ENCODE measurements at regions of chr1 and their contacts with region 1.

Region 1: DNA sequence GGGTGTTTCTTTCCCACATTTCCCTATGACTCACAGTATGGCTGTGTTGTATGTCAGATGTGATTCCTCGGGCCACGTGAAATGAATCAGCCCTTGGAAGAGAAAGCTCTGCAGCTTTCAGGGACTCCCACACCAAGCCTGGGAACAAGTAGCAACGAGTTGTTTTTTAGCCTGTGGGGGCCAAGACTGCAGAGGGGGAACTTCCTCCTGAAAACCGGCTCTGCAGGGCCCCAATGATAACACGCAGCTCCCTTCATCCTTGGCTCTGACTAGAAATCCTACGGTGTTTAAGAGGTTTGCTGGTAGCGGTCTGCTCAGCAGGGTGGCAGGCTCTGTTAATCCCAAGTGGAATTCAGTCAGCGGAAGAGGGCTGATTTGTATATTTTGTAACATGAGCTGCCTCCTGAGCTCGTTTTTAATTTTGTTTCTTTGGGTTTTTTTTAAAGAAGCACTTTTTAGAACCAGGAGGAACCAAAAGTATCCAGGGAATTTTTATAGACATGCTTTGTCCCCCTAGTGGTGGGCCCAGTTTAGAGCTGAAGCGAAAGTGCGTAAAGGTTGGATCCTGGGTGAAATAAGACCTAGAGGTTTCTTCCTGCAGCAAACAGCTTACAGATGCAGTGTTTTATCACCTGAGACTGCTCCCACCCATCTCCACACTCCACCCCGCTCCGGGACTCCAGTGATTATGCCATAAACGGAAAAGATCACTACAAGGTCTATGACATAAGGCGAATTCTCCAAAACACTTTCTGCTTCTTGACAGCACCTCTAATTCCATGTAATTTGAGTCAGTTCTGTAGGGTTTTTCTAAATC is 48.8 kb downstream of the LAMC2 start:
- DNase-seq: peak; percentile 27
- H3K4me3 ChIP-seq: peak overlapping the region; percentile 44 to 63
- H3K27ac ChIP-seq: peak overlapping the region; percentile 86 to 98
- H3K4me1 ChIP-seq: peaks cover 6 to 23% of the 10 kb centered on the region in 2 experiments; a peak in 2 of 4 replicates
- H3K27me3 ChIP-seq: no peaks in the 10 kb centered on the region
- CTCF ChIP-seq: peak; percentile 90
- EP300 ChIP-seq: peak in 1 of 2 experiments; percentile 61; a peak in 1 of 4 replicates
- RAD21 ChIP-seq: no peak; the same call in 1 of the 2 replicates

Region 2: DNA sequence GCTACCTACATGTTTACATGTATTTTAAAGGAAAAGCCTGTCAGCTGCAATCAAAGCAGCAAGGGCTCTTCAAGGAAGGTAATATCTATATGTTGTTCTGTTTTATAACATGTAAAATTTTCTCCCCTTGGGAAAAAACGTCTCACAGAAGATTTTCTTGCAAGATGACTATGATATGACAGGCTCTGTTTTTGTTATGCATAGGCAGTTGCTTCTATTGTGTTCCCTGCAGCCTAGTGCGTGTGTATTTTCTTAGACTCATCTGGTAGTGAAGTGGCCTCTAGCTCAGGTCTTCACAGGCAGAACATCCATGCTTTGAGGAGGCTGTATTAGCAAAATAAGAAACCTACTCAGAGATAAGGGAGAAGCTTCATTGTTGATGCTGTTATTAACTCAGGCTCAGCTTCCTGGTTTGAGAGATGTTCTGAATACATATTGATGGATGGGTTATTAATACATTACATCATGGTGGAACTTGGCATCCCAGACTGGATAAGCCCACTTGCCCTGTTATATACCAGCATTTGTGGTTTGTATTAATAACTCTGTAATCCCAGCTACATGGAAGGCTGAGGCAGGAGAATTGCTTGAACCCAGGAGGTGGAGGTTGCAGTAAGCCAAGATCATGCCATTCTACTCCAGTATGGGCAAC is 175.9 kb before region 1 on chr1:
- CTCF ChIA-PET with region 1: no interaction called
- POLR2A ChIA-PET with region 1: no interaction called
- DNase-seq: no peak
- H3K4me3 ChIP-seq: no peak overlapping the region
- H3K27ac ChIP-seq: peak overlapping the region in 1 of 2 experiments; percentile 84; a peak in 1 of 4 replicates
- H3K4me1 ChIP-seq: peaks cover 0 to 35% of the 10 kb centered on the region in 2 experiments; a peak in 3 of 4 replicates
- H3K27me3 ChIP-seq: no peaks in the 10 kb centered on the region
- CTCF ChIP-seq: no peak
- EP300 ChIP-seq: no peak
- RAD21 ChIP-seq: no peak

Region 3: DNA sequence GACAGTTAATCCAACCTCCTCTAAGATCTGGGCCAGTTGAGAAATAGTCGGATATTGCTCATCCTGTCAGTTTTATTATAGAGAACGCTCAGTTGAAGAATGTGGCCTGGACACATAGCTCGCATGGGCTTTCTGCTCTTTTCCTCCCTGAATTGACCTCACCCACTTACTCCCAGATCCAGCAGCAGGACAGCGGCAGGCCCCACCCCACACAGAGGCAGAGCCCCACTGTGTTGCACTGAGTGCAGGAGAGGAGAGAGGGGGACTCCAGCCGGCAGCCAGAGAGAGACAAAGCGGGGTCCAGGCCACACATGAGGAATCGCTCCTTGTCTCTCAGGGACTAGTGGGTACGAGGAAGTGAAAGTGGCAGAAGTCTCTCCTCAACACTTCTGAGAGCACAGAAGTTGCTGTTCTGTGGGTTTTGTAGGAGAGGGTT is 133.0 kb before region 1 on chr1:
- CTCF ChIA-PET with region 1: no interaction called
- POLR2A ChIA-PET with region 1: no interaction called
- DNase-seq: no peak
- H3K4me3 ChIP-seq: no peak overlapping the region
- H3K27ac ChIP-seq: no peak overlapping the region
- H3K4me1 ChIP-seq: peaks cover 4 to 10% of the 10 kb centered on the region in 2 experiments; a peak in 3 of 4 replicates
- H3K27me3 ChIP-seq: no peaks in the 10 kb centered on the region
- CTCF ChIP-seq: no peak
- EP300 ChIP-seq: no peak
- RAD21 ChIP-seq: no peak

Region 4: GRCh38 chr1:183218971-183219615 is 15.8 kb before region 1 on chr1:
- CTCF ChIA-PET with region 1: interaction called, 10 read pairs
- POLR2A ChIA-PET with region 1: no interaction called
- DNase-seq: no peak
- H3K4me3 ChIP-seq: no peak overlapping the region
- H3K27ac ChIP-seq: no peak overlapping the region
- H3K4me1 ChIP-seq: peaks cover 0 to 3% of the 10 kb centered on the region in 2 experiments; a peak in 1 of 4 replicates
- H3K27me3 ChIP-seq: no peaks in the 10 kb centered on the region
- CTCF ChIP-seq: no peak
- EP300 ChIP-seq: no peak
- RAD21 ChIP-seq: no peak

Region 5: DNA sequence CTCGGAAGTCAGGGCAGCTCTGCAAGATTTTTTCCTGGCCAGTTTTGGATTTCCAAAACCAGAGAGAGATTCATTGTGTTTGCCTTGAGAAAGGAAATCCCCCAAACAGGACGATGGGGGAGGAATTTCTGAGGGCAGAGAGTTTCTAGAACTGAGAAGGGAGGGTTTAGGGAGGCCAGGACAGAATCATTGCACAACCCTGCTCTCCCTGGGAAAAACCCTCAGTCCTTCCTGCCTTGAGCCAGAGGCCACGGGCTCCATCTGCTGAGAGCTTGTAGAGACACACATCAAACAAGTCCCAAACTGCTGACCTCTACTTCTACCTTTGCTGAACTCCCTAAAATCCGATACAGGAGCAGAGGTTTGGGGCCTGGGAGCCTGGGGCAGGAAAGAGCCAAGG is 83.6 kb after region 1 on chr1:
- CTCF ChIA-PET with region 1: no interaction called
- POLR2A ChIA-PET with region 1: no interaction called
- DNase-seq: no peak
- H3K4me3 ChIP-seq: no peak overlapping the region
- H3K27ac ChIP-seq: no peak overlapping the region
- H3K4me1 ChIP-seq: peaks cover 3 to 4% of the 10 kb centered on the region in 2 experiments; a peak in 1 of 4 replicates
- H3K27me3 ChIP-seq: no peaks in the 10 kb centered on the region
- CTCF ChIP-seq: peak; percentile 50
- EP300 ChIP-seq: no peak
- RAD21 ChIP-seq: peak; percentile 39; the same call in 1 of the 2 replicates

Region 6: GRCh38 chr1:183821889-183822611 is 587.2 kb after region 1 on chr1:
- CTCF ChIA-PET with region 1: no interaction called
- POLR2A ChIA-PET with region 1: no interaction called
- DNase-seq: no peak
- H3K4me3 ChIP-seq: peak overlapping the region in 1 of 2 experiments; percentile 16; a peak in 1 of 4 replicates
- H3K27ac ChIP-seq: peak overlapping the region; percentile 79 to 95
- H3K4me1 ChIP-seq: peaks cover 17 to 22% of the 10 kb centered on the region in 2 experiments
- H3K27me3 ChIP-seq: no peaks in the 10 kb centered on the region
- CTCF ChIP-seq: no peak
- EP300 ChIP-seq: peak in 1 of 2 experiments; percentile 21; a peak in 1 of 4 replicates
- RAD21 ChIP-seq: no peak

Measured in SK-N-SH (cell line).